ENCODE measurements at regions of chr6 and their contacts with region 1.

Region 1: GRCh38 chr6:116531675-116532570 is 13.6 kb downstream of the TRAPPC3L start:
- DNase-seq: peak; percentile 69
- H3K4me3 ChIP-seq: no peak overlapping the region
- H3K27ac ChIP-seq: no peak overlapping the region
- H3K4me1 ChIP-seq: no peaks in the 10 kb centered on the region
- CTCF ChIP-seq: peak; percentile 91

Region 2: GRCh38 chr6:116287689-116288282 is 244.1 kb before region 1 on chr6:
- CTCF ChIA-PET with region 1: interaction called, 3 read pairs
- POLR2A ChIA-PET with region 1: interaction called, 4 read pairs
- intact Hi-C with region 1: loop called (anchors 1 kb)
- DNase-seq: peak; percentile 65
- H3K4me3 ChIP-seq: no peak overlapping the region
- H3K27ac ChIP-seq: no peak overlapping the region
- H3K4me1 ChIP-seq: peaks cover 5% of the 10 kb centered on the region
- CTCF ChIP-seq: peak; percentile 92

Region 3: DNA sequence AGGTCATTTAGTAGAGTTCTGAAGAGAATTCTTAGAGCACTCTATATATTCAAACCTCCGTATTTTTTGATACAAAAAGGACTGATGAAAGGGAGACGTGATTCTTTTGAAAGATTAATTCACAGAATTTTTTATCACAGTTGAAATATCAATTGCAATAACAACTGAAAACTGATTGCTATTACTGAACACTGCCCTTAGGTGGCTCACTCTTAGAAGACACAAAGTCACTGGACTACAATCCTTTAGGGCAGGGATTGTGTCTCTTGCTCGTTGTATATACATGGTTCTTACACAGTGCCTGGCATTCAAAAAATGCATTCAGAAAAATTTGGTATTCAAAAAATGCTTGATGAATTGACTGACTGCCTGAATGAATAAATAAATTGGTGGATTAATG is 87.8 kb before region 1 on chr6:
- CTCF ChIA-PET with region 1: no interaction called
- POLR2A ChIA-PET with region 1: no interaction called
- intact Hi-C with region 1: loop called (anchors 1 kb)
- DNase-seq: peak; percentile 44
- H3K4me3 ChIP-seq: no peak overlapping the region
- H3K27ac ChIP-seq: no peak overlapping the region
- H3K4me1 ChIP-seq: no peaks in the 10 kb centered on the region
- CTCF ChIP-seq: peak; percentile 78

Region 4: DNA sequence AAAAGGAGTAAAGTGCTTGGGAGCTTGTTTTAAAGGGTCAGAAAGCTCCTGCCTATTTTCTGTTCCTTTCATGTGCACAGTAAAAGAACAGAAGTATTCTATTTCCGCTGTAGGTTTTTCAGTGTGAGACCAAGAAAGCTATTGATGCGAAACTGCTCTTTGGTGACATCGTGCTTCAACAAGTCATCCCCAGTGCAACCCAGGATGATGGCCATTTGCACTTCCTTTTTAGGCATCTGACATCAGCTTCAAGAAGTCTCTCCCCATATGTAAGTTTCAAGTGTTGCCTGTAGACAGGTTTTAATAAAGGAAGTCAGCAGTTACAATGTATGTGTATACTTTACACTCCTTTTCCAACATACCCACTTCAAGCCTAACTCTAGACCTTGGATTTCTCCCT is 476.7 kb after region 1 on chr6:
- CTCF ChIA-PET with region 1: no interaction called
- POLR2A ChIA-PET with region 1: no interaction called
- intact Hi-C with region 1: no loop called
- DNase-seq: peak; percentile 71
- H3K4me3 ChIP-seq: peak overlapping the region; percentile 14
- H3K27ac ChIP-seq: peak overlapping the region; percentile 55
- H3K4me1 ChIP-seq: peaks cover 18% of the 10 kb centered on the region
- CTCF ChIP-seq: no peak